ENCODE measurements at regions of chr11 and their contacts with region 1.

Region 1: DNA sequence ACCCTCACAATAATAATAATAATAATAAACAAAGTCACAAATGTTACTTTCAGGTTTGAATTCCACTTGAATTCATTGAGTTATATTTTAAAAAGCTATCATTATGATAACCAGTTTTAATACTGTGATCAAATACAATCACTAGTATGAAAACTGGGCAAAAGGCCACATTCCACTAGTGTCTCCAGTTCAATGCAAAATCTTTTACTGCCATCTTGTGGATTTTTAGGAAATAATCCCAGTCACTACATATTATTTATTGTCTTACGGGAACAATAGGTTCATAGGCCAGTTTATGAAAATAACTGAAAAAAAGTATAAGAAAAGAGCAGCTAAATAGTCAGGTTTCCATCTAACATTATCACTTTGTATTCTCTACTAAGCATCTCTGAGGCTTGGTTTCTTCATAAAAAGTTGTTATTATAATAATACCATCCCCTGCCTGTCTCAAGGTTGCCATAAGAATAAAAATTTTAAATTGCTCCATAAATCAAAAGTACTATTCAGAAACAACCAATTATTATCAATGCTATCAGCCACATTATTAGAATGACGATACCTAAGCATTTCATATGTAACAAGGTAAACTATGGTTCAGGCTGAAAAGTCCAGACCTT is 533.9 kb upstream of the CCDC90B start:
- DNase-seq: peak; percentile 79
- ATAC-seq: no peak
- H3K4me3 ChIP-seq: no peak overlapping the region
- H3K27ac ChIP-seq: no peak overlapping the region
- H3K4me1 ChIP-seq: peaks cover 3% of the 10 kb centered on the region
- H3K27me3 ChIP-seq: no peaks in the 10 kb centered on the region
- CTCF ChIP-seq: peak; percentile 87
- POLR2A ChIP-seq: no peak
- RAD21 ChIP-seq: peak; percentile 87

Region 2: GRCh38 chr11:82682003-82682751 is 1137.9 kb before region 1 on chr11:
- CTCF ChIA-PET with region 1: no interaction called
- POLR2A ChIA-PET with region 1: no interaction called
- dilution Hi-C with region 1: no loop called
- in situ Hi-C with region 1: loop called (anchors 25 kb)
- intact Hi-C with region 1: loop called (anchors 1 kb)
- DNase-seq: peak; percentile 75
- ATAC-seq: peak; percentile 90
- H3K4me3 ChIP-seq: no peak overlapping the region
- H3K27ac ChIP-seq: no peak overlapping the region
- H3K4me1 ChIP-seq: no peaks in the 10 kb centered on the region
- H3K27me3 ChIP-seq: no peaks in the 10 kb centered on the region; the same call in 1 of the 2 replicates
- CTCF ChIP-seq: peak; percentile 70
- POLR2A ChIP-seq: no peak
- RAD21 ChIP-seq: peak; percentile 69

Region 3: GRCh38 chr11:82775736-82776346 is 1044.2 kb before region 1 on chr11:
- CTCF ChIA-PET with region 1: no interaction called
- POLR2A ChIA-PET with region 1: no interaction called
- dilution Hi-C with region 1: no loop called
- in situ Hi-C with region 1: no loop called
- intact Hi-C with region 1: loop called (anchors 5 kb)
- DNase-seq: peak; percentile 47
- ATAC-seq: peak; percentile 98
- H3K4me3 ChIP-seq: no peak overlapping the region
- H3K27ac ChIP-seq: no peak overlapping the region
- H3K4me1 ChIP-seq: no peaks in the 10 kb centered on the region
- H3K27me3 ChIP-seq: no peaks in the 10 kb centered on the region
- CTCF ChIP-seq: peak; percentile 84
- POLR2A ChIP-seq: no peak
- RAD21 ChIP-seq: peak; percentile 69

Region 4: GRCh38 chr11:82900277-82901164 is 919.5 kb before region 1 on chr11 and contains the start of gene PRCP:
- CTCF ChIA-PET with region 1: no interaction called
- POLR2A ChIA-PET with region 1: no interaction called
- dilution Hi-C with region 1: no loop called
- in situ Hi-C with region 1: loop called (anchors 25 kb)
- intact Hi-C with region 1: loop called (anchors 5 kb)
- DNase-seq: peak; percentile 85
- ATAC-seq: peak; percentile 92
- H3K4me3 ChIP-seq: peak within 1 kb of the TSS; percentile 64
- H3K27ac ChIP-seq: peak within 1 kb of the TSS; percentile 75
- H3K4me1 ChIP-seq: 0 out of 2 replicates have a peak, but pooled peaks cover 1% of the 10 kb centered on the region
- H3K27me3 ChIP-seq: no peaks in the 10 kb centered on the region
- CTCF ChIP-seq: no peak
- POLR2A ChIP-seq: peak; percentile 63
- RAD21 ChIP-seq: no peak
- total RNA-seq, gene PRCP: 31.7 TPM in 2 replicates

Region 5: DNA sequence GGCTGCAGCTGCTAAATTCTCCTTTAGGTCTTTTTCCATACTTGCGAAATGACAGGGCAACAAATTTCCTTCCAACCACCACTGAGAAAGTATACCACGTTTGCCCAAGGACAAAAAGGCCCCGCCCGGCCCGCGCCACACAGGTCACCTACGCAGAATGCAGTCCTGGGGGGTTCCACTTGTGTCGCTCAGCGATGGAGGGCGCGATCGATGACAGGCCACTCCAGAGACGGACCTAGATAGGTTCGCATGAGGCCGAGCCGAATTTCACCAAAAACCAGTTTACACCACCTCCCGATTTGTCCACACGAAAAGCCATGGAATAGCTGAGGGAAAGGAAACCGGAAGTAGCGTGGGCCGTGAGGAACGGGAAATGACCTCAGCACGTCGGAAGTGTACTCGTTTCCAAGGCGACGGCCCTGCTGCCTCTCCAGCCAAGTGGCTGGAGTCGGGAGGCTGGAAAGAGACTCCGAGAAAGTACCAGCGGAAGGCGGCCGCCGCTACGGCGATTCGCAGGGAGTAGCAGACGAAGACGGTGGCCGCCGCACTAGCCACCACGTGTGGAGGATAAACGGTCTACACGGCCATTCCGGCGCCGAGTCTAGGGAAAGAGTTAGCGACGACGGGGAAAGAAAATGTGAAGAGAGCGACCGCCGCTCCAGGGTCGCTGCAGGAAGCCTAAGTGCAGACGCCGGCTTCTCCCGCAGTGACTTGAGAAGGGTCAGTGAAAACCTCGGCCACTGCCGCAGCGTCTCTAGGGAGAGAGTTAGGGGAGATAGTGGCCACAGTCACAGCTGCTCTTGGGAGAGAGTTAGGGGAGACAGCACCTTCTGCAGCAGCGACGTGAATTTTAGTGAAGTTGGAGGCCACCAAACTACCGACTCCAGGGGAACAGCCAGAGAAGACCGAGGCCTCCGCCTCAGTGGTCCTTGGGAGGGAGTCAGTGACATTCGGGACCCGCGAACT is 626.4 kb before region 1 on chr11 and contains the start of gene ANKRD42:
- CTCF ChIA-PET with region 1: no interaction called
- POLR2A ChIA-PET with region 1: no interaction called
- dilution Hi-C with region 1: no loop called
- in situ Hi-C with region 1: no loop called
- intact Hi-C with region 1: loop called (anchors 5 kb)
- DNase-seq: peak; percentile 96
- ATAC-seq: peak; percentile 81
- H3K4me3 ChIP-seq: peak within 1 kb of the TSS; percentile 85
- H3K27ac ChIP-seq: peak within 1 kb of the TSS; percentile 99
- H3K4me1 ChIP-seq: peaks cover 4% of the 10 kb centered on the region; the same call in 1 of the 2 replicates
- H3K27me3 ChIP-seq: no peaks in the 10 kb centered on the region
- CTCF ChIP-seq: no peak
- POLR2A ChIP-seq: peak; percentile 86
- RAD21 ChIP-seq: peak; percentile 9; the same call in 1 of the 2 replicates
- total RNA-seq, gene ANKRD42: 5.6 and 6.9 TPM in 2 replicates

Region 6: DNA sequence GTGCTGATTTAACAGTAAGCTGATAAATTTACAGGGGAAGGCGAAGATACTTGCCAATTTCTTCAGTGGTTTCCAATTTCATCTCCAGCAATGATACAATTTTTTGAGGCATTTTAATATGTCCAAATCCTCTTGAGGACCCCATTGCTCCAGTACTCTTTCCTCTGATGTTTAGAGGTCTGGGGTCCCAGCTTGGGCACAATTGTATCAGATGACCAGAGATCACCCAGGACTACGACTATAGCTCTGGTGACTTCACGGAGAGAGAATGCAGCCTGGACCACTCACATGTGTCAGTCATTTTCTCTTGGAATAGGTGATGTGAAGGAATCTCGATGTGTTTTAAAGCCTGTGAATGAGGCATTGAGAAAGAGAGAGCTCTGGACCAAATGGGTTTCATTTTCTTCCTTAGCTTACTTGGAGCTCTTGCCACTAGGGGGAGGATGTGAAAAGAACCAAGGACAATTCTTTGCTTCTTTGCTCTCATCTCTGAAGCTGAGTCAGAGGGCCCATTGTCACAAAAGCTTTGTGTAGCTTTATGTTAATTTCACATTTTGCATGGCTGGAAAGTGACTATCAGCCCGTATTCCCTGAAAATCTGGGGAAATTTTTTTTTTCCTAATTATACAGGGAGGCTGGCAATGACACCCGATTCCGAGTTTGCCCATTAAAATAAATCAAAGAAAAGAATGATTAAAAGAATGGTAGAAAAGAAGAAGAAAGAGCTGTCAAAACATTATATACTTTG is 527.2 kb before region 1 on chr11:
- CTCF ChIA-PET with region 1: interaction called, 7 read pairs
- POLR2A ChIA-PET with region 1: no interaction called
- dilution Hi-C with region 1: no loop called
- in situ Hi-C with region 1: loop called (anchors 5 kb)
- intact Hi-C with region 1: loop called (anchors 1 kb)
- DNase-seq: peak; percentile 73
- ATAC-seq: peak; percentile 94
- H3K4me3 ChIP-seq: peak overlapping the region; percentile 17; the same call in 1 of the 2 replicates
- H3K27ac ChIP-seq: no peak overlapping the region
- H3K4me1 ChIP-seq: no peaks in the 10 kb centered on the region
- H3K27me3 ChIP-seq: peaks cover 4% of the 10 kb centered on the region; the same call in 1 of the 2 replicates
- CTCF ChIP-seq: peak; percentile 77
- POLR2A ChIP-seq: no peak
- RAD21 ChIP-seq: peak; percentile 67

Region 7: GRCh38 chr11:83392556-83392955 is 427.5 kb before region 1 on chr11:
- CTCF ChIA-PET with region 1: no interaction called
- POLR2A ChIA-PET with region 1: no interaction called
- dilution Hi-C with region 1: no loop called
- in situ Hi-C with region 1: no loop called
- intact Hi-C with region 1: no loop called
- DNase-seq: no peak
- ATAC-seq: no peak
- H3K4me3 ChIP-seq: no peak overlapping the region
- H3K27ac ChIP-seq: no peak overlapping the region
- H3K4me1 ChIP-seq: no peaks in the 10 kb centered on the region
- H3K27me3 ChIP-seq: no peaks in the 10 kb centered on the region
- CTCF ChIP-seq: no peak
- POLR2A ChIP-seq: no peak
- RAD21 ChIP-seq: no peak

Region 8: GRCh38 chr11:84243629-84244263 is 423.7 kb after region 1 on chr11:
- CTCF ChIA-PET with region 1: no interaction called
- POLR2A ChIA-PET with region 1: no interaction called
- dilution Hi-C with region 1: no loop called
- in situ Hi-C with region 1: no loop called
- intact Hi-C with region 1: no loop called
- DNase-seq: no peak
- ATAC-seq: no peak
- H3K4me3 ChIP-seq: no peak overlapping the region
- H3K27ac ChIP-seq: no peak overlapping the region
- H3K4me1 ChIP-seq: no peaks in the 10 kb centered on the region
- H3K27me3 ChIP-seq: no peaks in the 10 kb centered on the region
- CTCF ChIP-seq: no peak
- POLR2A ChIP-seq: no peak
- RAD21 ChIP-seq: no peak

Measured in IMR-90 (cell line).